Posterior cingulate gyrus (tissue), 11 donors: ENCODE measurements at regions of chr7 and their contacts with region 1.

Region 1: GRCh38 chr7:131431289-131431688 is 103.6 kb downstream of the MKLN1 start:
- DNase-seq: peak in 8 of 10 donors; percentile 48 to 93 (median 60)

Region 2: DNA sequence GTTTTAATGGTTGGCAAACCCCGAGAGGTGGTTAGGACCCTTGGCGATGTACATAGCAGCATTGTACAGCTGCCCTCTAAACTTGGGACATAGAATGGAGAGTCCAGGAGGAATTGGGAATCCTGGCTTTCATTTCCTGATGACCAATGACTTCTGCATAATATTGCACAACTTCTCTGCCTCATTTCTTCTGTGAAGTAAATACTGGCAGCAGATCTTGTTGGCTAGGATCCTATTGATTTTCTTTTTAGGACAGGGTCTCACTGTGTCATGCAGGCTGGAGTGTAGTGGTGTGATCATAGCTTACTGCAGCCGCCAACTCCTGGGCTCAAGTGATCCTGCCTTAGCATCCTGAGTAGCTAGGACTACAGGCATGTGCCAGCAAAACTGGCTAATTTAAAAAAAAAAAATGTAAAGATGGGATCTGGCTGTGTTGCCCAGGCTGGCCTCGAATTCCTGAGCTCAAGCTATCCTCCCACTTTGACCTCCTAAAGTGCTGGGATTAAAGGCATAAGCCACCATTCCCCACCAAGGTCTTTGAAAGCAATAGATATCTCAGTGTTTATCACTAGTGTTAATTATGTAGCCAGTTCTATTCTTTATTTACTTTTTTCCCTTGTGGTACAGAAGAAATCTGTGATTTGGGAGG is 67.1 kb after region 1 on chr7:
- intact Hi-C with region 1: loop called (anchors 5 kb)
- DNase-seq: no peak

Region 3: DNA sequence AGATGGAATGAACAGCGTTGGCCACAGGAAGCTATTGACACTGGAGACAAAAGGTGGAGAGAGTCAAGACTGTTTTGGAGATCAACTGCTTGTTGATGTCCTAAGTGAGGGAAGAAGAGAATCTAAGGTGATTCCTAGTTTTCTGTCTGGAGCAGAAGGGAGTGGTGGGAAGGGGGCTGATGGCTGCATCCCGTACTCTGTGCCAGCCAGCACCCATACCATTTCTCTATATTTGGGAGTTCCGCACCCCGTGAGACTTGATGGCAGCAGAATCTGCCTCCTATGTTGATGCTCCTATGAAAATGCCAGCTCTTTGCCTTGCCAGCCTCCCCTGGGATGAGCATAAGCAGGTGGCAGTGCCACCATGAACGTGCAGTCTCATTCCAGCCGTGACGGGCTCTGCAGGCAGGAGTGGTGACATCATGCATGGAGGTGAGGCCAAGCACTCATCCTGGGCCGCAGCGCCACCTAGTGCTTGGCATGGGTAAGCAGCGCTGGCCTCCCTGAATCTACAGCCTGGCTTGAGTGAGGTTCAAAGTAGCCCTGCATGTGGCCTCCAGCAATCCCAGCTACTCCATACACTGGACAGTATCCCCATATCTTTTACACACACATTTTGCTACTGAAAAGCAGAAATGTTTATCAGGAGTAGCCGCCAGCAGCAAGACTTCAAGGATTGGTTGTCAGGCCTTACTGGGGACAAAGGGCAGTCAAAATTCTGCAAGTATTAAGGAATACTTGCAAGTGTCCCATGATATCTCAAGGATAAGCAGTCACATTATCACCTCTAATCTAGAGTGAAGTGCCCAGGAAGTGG is 82.2 kb after region 1 on chr7:
- intact Hi-C with region 1: no loop called
- DNase-seq: peak; percentile 58 to 97 (median 86)